ENCODE measurements at regions of chr22 and their contacts with region 1.

Region 1: GRCh38 chr22:26665813-26666231 is 8.4 kb downstream of the MIAT start:
- DNase-seq: no peak
- ATAC-seq: peak in 1 of 4 experiments; percentile 10
- H3K4me3 ChIP-seq: no peak overlapping the region
- H3K4me3 Mint-ChIP-seq: no peak overlapping the region
- H3K27ac ChIP-seq: no peak overlapping the region
- H3K27ac Mint-ChIP-seq: peak overlapping the region; percentile 90 to 91
- H3K4me1 ChIP-seq: peaks cover 2 to 50% of the 10 kb centered on the region in 2 experiments
- H3K4me1 Mint-ChIP-seq: peaks cover 34 to 67% (median 46%) of the 10 kb centered on the region in 3 donors
- H3K27me3 ChIP-seq: no peaks in the 10 kb centered on the region
- H3K27me3 Mint-ChIP-seq: no peaks in the 10 kb centered on the region

Region 2: GRCh38 chr22:26502688-26503561 is 162.9 kb before region 1 on chr22:
- CTCF ChIA-PET with region 1: interaction called, 3 to 17 read pairs
- POLR2A ChIA-PET with region 1: interaction called in 1 of 2 experiments, 7 read pairs
- DNase-seq: peak; percentile 26 to 81 (median 58)
- ATAC-seq: peak; percentile 76 to 95 (median 92)
- H3K4me3 ChIP-seq: no peak overlapping the region
- H3K4me3 Mint-ChIP-seq: peak overlapping the region in 2 of 3 donors; percentile 28 to 52
- H3K27ac ChIP-seq: peak overlapping the region; percentile 52
- H3K27ac Mint-ChIP-seq: peak overlapping the region; percentile 68 to 76
- H3K4me1 ChIP-seq: peaks cover 5 to 18% of the 10 kb centered on the region in 2 experiments
- H3K4me1 Mint-ChIP-seq: peaks cover 18 to 31% (median 24%) of the 10 kb centered on the region in 3 donors
- H3K27me3 ChIP-seq: no peaks in the 10 kb centered on the region
- H3K27me3 Mint-ChIP-seq: no peaks in the 10 kb centered on the region